ENCODE measurements at regions of chr3 and their contacts with region 1.

Region 1: DNA sequence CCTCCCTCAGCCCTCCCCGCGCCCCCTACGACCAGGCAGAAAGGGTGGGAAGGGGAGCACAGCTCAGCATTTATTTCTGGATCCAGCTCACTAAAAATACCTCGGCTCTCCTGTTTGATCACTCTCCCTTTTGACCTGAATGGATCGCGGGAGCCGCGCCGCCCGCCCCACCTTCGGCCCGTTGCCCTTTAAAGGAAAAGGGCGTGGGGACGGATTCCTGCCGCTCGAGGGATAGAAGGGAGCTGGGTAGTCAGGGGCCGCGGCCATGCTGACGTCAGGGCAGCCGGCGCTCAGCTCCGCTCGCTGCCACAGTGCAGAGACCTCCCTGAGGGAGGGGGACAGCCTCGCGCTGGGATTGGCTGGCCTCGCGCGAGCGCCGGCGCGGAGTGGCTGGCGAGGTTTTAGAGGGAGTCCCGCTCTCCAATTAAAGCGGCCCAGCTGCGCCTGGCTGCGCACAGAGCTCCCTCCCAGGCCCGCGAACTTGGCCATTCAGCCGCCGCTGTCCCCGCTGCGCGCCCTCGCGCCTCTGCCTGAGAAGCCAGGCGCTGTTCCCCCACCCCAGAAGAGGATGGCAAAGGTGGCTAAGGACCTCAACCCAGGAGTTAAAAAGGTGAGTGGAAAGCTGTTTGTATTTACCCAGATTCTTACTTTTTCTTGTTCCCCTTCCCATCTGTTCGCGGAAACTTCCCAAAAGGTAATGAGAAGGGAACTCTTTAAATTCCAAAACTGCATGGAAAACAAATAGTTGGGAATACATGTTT is at the start of gene LMCD1:
- DNase-seq: peak; percentile 87
- H3K4me3 ChIP-seq: peak within 1 kb of the TSS; percentile 52
- H3K27me3 ChIP-seq: no peaks in the 10 kb centered on the region
- CTCF ChIP-seq: peak; percentile 51
- polyA plus RNA-seq, gene LMCD1: 157 and 168 TPM in 2 replicates

Region 2: DNA sequence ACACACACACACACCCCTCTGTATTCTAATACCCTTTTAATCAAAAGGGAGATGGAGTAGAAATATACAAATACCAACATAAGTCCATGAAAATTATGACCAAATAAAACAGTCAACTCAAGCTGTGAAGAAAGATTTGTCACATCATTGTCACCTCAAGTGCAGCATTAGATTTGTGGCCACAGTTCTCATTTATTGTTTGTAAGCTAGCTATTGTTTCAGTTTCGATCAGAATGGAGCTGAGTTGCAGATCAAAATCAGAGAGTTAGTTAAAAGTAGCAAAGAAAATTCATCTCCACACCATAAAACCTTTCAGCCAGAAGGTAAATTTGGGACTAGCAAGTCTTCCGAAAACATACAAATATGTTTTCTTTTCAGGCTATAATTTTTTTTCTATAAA is 267.6 kb before region 1 on chr3:
- CTCF ChIA-PET with region 1: no interaction called
- POLR2A ChIA-PET with region 1: no interaction called
- DNase-seq: no peak
- H3K4me3 ChIP-seq: no peak overlapping the region
- H3K27me3 ChIP-seq: no peaks in the 10 kb centered on the region; the same call in 1 of the 2 replicates
- CTCF ChIP-seq: no peak

Region 3: DNA sequence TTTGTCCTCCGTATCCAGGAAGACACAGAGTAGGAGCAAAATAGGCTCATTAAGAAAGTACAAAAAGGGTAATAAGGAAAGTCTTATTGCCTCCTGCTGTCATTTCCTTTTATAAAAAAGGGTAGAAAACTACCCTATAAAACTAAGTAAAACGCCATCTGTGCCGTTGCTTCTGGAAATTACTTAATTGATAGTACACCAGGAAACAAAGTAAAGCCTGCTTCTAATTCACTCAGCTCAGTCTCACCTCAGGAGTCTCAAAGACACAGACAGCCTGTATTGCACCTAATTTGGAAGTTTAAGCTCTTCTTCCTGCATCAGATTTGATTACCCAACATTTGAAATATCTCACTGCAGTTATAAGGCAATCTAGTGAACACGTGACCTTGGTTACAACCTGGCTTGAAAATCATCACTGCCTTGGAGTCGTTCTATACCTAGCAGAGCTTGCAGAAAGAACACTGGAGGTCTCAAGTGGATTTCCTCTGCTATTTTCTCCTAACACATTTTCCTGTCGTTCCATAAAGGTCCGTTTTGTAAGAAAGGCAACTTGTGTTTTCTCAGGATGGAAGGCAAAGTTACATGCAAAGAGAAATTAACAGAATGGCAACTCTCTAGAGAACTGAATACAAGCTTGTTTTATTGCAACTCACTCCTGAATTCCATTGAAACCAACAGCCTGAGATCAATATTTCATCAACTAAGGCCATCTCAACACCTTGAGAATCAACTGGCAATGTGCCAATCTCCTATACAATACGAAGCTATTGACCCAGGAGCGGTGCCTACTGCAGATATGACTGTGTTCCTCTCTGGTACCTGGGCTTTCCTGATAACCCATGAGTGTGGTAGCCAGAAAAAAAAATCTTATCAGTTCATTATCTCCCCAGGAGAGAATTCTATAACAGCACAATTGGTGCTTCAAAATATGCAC is 203.3 kb before region 1 on chr3:
- CTCF ChIA-PET with region 1: no interaction called
- POLR2A ChIA-PET with region 1: no interaction called
- DNase-seq: no peak
- H3K4me3 ChIP-seq: no peak overlapping the region
- H3K27me3 ChIP-seq: no peaks in the 10 kb centered on the region; the same call in 1 of the 2 replicates
- CTCF ChIP-seq: no peak

Region 4: GRCh38 chr3:8482960-8483665 is 18.4 kb before region 1 on chr3:
- CTCF ChIA-PET with region 1: interaction called, 7 read pairs
- POLR2A ChIA-PET with region 1: interaction called, 10 read pairs
- DNase-seq: peak; percentile 95
- H3K4me3 ChIP-seq: no peak overlapping the region
- H3K27me3 ChIP-seq: no peaks in the 10 kb centered on the region
- CTCF ChIP-seq: no peak

Region 5: DNA sequence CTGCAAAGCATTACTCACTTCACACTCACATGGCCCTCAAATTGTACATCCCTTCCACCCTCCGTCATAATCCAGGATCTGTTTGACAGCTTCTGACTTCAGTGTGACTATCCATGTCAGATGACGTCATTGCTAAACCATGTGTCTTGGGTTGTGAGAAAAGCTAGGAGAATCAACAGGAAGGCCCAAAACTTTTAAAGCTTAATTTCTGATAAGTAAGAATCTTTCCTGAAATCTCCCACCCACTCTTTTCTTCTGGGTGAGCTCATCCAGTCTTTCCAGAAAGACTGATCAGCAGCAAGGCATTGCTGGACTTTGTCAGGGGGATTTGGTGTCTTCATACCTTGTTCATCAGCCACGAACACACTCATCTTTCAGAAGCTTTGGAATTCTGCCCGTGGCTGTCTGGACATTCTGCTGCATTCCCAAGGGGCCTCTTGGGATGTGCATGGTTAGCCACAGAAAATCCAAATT is 11.4 kb before region 1 on chr3:
- CTCF ChIA-PET with region 1: interaction called, 6 read pairs
- POLR2A ChIA-PET with region 1: interaction called, 13 read pairs
- DNase-seq: peak; percentile 86
- H3K4me3 ChIP-seq: no peak overlapping the region
- H3K27me3 ChIP-seq: no peaks in the 10 kb centered on the region
- CTCF ChIP-seq: no peak